Activated CD4-positive, alpha-beta memory T cell treated with anti-CD3 and anti-CD28 coated beads for 36 hours (primary cell): ENCODE measurements at regions of chr19 and their contacts with region 1.

Region 1: GRCh38 chr19:38335949-38336637 is 463 bp downstream of the CATSPERG start:
- DNase-seq: peak; percentile 98
- H3K4me3 Mint-ChIP-seq: peak overlapping the region; percentile 91
- H3K27ac Mint-ChIP-seq: peak overlapping the region; percentile 96
- H3K4me1 Mint-ChIP-seq: peaks cover 6% of the 10 kb centered on the region
- H3K27me3 Mint-ChIP-seq: no peaks in the 10 kb centered on the region

Region 2: DNA sequence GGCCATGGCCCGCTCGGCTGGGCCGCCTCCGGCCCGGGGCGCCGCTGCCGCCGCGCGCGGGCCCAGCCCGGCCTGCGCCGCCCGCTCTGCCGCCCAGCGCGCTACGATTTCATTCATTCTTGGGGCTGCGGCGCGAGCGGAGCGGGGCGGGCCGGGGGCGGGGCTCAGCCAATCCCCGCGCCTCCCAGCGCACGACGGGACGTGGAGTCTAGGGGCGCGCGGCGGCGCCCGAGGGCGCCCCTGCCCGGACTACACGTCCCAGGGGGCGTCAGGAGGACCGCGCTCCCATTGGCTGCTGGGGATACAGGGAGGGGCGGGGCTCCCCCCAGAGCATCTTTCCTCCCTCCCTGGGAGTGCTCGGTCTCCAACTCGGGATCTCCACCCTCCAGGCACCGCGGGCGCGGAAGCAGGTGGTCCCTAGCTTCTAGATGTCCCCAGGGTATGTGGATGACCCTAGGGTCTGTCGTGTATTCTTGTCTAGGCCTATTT is 106.5 kb before region 1 on chr19:
- CTCF ChIA-PET with region 1: interaction called, 16 read pairs
- POLR2A ChIA-PET with region 1: no interaction called
- intact Hi-C with region 1: loop called (anchors 2 kb)
- DNase-seq: peak; percentile 83
- H3K4me3 Mint-ChIP-seq: no peak overlapping the region
- H3K27ac Mint-ChIP-seq: no peak overlapping the region
- H3K4me1 Mint-ChIP-seq: peaks cover 12% of the 10 kb centered on the region
- H3K27me3 Mint-ChIP-seq: peaks cover 43% of the 10 kb centered on the region

Region 3: DNA sequence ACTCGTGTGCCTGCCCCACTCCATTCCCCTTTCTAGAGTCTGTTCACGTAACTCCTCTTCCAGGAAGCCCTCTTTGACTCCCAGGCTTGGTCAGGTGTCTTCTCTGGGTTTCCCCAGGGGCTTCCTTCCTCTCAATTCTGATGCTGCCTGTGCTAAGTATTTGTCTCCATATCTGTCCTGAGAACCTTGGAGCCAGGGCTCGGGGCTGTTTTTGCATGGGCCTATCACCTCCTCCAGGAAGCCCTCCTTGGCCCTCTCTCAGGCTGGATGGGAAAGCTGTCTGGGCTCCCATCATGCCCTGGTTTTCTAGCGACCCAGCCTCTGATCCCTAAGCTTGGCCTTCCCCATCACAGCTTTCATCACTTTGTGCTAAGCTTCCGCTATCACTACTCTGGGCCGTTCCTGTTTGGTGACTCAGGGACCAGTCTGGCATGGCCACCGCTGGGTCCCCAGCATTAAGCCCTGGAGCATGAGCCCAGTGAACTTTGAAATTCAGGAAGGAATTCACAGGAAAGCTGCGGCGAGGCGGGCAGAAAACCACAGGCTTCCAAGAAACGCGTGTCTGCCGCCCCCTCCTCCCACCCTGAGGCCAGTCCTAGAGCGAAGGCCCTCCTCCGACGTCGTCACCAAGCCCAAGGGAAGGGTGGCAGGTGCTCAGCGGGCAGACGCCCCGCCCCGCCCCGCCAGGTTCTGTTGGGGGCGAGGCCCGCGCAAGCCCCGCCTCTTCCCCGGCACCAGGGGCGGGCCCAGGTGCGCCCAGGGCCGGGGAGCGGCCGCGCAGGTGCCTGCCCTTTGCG is 72.2 kb before region 1 on chr19:
- CTCF ChIA-PET with region 1: interaction called, 4 read pairs
- POLR2A ChIA-PET with region 1: no interaction called
- intact Hi-C with region 1: loop called (anchors 1 kb)
- DNase-seq: peak; percentile 90
- H3K4me3 Mint-ChIP-seq: peak overlapping the region; percentile 79
- H3K27ac Mint-ChIP-seq: peak overlapping the region; percentile 96
- H3K4me1 Mint-ChIP-seq: peaks cover 33% of the 10 kb centered on the region
- H3K27me3 Mint-ChIP-seq: peaks cover 3% of the 10 kb centered on the region

Region 4: GRCh38 chr19:38361633-38362075 is 25.6 kb after region 1 on chr19:
- CTCF ChIA-PET with region 1: interaction called, 8 read pairs
- POLR2A ChIA-PET with region 1: no interaction called
- intact Hi-C with region 1: loop called (anchors 1 kb)
- DNase-seq: peak; percentile 85
- H3K4me3 Mint-ChIP-seq: peak overlapping the region; percentile 82
- H3K27ac Mint-ChIP-seq: no peak overlapping the region
- H3K4me1 Mint-ChIP-seq: peaks cover 8% of the 10 kb centered on the region
- H3K27me3 Mint-ChIP-seq: peaks cover 12% of the 10 kb centered on the region

Region 5: GRCh38 chr19:38387550-38388348 is 51.7 kb after region 1 on chr19 and contains the start of gene GGN:
- CTCF ChIA-PET with region 1: no interaction called
- POLR2A ChIA-PET with region 1: no interaction called
- intact Hi-C with region 1: loop called (anchors 1 kb)
- DNase-seq: peak; percentile 92
- H3K4me3 Mint-ChIP-seq: peak within 1 kb of the TSS; percentile 78
- H3K27ac Mint-ChIP-seq: peak within 1 kb of the TSS; percentile 69
- H3K4me1 Mint-ChIP-seq: peaks cover 25% of the 10 kb centered on the region
- H3K27me3 Mint-ChIP-seq: peaks cover 3% of the 10 kb centered on the region
- total RNA-seq, gene GGN: 0.41 to 1.2 TPM

Region 6: GRCh38 chr19:38417544-38418506 is 81.7 kb after region 1 on chr19:
- CTCF ChIA-PET with region 1: no interaction called
- POLR2A ChIA-PET with region 1: no interaction called
- intact Hi-C with region 1: no loop called
- DNase-seq: peak; percentile 81
- H3K4me3 Mint-ChIP-seq: peak overlapping the region; percentile 69
- H3K27ac Mint-ChIP-seq: peak overlapping the region; percentile 65
- H3K4me1 Mint-ChIP-seq: peaks cover 20% of the 10 kb centered on the region
- H3K27me3 Mint-ChIP-seq: no peaks in the 10 kb centered on the region

Region 7: DNA sequence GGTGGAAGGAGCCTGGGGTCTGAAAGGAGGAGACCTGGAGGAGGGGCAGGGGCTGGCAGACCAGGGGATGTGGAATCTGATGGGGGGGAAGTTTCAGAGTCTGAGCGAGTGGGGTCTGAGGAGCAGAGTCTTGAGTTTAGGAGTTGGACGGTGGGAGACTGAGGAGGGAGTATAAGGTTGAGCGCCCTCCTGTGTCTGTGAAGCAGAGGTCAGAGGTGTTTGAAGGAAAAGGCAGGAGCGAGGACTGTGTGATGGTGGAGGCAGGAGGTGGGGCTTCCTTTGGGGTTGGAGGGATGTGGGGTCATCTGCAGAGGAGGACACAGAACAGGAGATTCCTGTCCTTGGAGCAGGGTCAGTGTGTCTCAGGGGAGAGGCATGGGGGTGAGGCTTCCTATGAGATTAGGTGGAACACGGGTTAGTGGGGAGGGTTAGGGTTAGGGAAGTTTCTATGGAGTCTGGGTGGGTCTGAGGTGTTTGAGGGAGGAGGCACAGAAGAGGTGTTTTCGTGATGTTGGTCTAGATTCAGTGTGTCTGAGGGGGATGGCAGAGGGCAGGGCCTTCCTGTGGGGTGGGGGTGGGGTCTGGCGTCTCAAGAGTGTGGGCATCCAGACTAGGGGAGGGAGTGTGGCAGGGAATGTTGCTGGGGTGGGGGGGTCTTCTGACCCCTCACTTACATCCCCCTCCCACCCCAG is 105.7 kb after region 1 on chr19:
- CTCF ChIA-PET with region 1: no interaction called
- POLR2A ChIA-PET with region 1: no interaction called
- intact Hi-C with region 1: no loop called
- DNase-seq: peak; percentile 26
- H3K4me3 Mint-ChIP-seq: no peak overlapping the region
- H3K27ac Mint-ChIP-seq: no peak overlapping the region
- H3K4me1 Mint-ChIP-seq: peaks cover 3% of the 10 kb centered on the region
- H3K27me3 Mint-ChIP-seq: peaks cover 12% of the 10 kb centered on the region